ENCODE measurements at regions of chr7 and their contacts with region 1.

Region 1: DNA sequence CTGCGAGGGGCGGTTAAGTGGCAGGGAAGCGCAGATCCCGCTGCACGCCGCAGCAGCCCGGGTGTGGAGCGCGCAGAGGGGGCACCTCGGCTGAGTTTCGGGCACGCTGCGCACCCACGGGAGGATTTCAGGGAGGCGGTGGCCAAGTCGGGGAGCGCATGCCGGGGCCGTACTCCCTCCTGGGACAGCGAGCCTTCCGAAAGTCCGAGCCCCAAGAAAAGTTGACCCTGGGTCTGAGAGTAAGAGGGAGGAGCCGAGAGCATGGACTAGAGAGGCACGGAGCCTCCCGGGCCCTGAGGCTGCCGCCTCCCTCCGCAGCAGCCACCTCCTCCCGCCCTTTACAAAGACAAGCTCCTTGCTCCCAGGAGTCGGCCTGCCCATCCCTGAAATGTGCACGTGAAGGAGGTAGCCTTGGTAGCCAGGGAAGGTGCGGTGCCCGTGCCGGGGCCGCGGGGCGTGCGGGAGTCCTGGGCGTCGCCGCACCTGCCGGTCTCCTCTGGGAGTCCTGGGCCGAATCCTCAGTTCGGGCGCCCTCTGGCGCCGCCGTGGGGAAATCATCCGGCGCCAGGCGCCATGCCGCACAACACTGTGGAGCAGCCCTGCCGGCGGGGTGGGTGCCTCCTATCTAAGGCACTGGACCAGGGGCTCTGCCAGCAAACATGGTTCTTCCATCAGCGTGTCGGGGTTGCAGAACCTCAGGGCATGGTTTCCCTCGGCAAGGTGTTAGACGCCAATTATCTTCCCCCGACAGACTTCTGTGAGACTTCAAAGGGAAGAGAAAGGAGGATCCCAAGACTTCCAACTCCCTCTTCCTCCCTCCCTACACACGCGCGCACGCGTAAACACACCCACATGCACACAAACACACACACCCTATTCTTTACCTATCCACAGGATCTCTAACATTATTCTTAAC is 104.0 kb downstream of the TRIL start:
- DNase-seq: peak; percentile 96
- H3K4me3 ChIP-seq: peak overlapping the region; percentile 58 to 64
- H3K27ac ChIP-seq: no peak overlapping the region
- H3K4me1 ChIP-seq: peaks cover 4 to 9% of the 10 kb centered on the region in 2 experiments; a peak in 2 of 4 replicates
- H3K27me3 ChIP-seq: peaks cover 27% of the 10 kb centered on the region; the same call in 1 of the 2 replicates
- CTCF ChIP-seq: peak; percentile 97
- EP300 ChIP-seq: no peak
- RAD21 ChIP-seq: peak; percentile 95

Region 2: DNA sequence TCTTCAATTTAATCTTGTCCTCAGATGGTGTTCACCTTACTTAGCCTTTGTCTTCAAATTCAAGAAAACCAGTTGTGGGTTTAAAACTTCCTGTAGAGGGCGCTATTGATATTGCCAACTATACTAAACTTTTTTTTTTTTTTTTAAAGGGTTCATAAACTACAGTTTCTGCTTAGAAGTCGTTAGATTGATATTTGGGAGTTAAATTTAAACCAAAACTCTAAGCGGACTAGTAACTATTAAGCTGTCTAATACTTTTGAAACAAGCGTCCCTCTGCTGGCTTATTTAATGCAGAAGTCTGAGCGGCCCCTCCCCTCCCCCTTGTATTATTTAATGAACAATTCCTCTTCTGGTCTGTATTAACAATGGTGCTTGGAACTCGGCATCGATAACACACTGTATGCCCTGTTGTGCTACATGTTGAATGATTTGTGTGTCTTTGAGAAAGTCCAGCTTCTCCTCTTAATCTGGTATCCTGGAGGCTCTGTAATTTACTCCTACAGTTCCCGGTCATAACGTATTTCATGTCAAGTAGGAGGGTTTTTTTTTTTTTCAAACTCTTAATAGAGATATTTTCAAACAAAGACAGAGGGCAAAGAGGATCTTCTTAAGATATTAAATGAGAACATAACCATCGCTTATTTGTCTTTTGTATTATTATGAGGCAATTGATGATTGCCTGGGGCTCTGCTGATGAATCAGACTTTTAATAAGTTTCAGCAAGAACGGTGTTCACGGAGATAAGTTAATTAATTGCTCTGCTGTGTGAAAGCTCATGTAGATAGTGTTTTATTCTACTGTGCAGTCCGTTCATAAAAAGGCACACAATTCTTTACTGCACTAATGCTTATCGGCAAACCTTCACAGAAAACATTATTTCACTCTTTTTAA is 464.3 kb before region 1 on chr7:
- CTCF ChIA-PET with region 1: interaction called, 28 read pairs
- POLR2A ChIA-PET with region 1: no interaction called
- DNase-seq: peak; percentile 44
- H3K4me3 ChIP-seq: peak overlapping the region; percentile 32 to 45
- H3K27ac ChIP-seq: no peak overlapping the region
- H3K4me1 ChIP-seq: peaks cover 0 to 6% of the 10 kb centered on the region in 2 experiments; a peak in 1 of 4 replicates
- H3K27me3 ChIP-seq: no peaks in the 10 kb centered on the region; the same call in 1 of the 2 replicates
- CTCF ChIP-seq: peak; percentile 99
- EP300 ChIP-seq: no peak
- RAD21 ChIP-seq: peak; percentile 85

Region 3: DNA sequence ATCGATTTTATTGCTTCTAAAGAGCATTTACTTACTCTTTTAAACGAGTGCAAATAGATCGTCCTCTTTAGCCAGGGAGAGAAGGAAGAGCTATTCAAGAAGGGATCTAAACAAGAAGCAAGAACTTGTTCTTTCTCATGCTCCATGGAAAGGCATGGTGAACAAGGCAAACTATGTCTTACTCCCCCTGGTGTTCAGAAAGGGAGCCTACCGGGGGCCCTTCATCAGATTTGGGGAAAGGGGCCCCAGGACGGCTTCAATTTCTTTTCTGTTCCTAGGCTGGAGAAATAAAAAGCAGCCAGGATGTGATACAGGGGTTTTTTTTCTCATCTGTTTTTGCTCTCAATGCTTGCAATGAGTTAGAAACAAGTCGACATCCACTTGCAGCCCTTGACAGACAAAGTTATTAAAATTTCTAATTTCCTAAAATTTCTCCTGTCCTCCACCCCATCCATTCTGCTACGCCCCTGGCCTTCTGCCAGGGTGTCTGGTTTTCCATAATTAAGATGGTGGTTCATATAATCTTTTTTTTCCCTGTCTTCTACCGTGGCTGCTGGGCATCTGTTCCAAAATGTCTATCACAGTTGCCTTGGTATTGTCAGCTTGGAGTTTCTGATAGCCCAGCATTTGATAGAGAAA is 227.3 kb before region 1 on chr7:
- CTCF ChIA-PET with region 1: interaction called, 14 read pairs
- POLR2A ChIA-PET with region 1: no interaction called
- DNase-seq: peak; percentile 60
- H3K4me3 ChIP-seq: no peak overlapping the region
- H3K27ac ChIP-seq: no peak overlapping the region
- H3K4me1 ChIP-seq: peaks cover 3 to 8% of the 10 kb centered on the region in 2 experiments; a peak in 2 of 4 replicates
- H3K27me3 ChIP-seq: no peaks in the 10 kb centered on the region
- CTCF ChIP-seq: peak; percentile 86
- EP300 ChIP-seq: no peak
- RAD21 ChIP-seq: peak; percentile 76

Region 4: GRCh38 chr7:28830846-28831245 is 23.2 kb before region 1 on chr7:
- CTCF ChIA-PET with region 1: interaction called, 10 read pairs
- POLR2A ChIA-PET with region 1: no interaction called
- DNase-seq: no peak
- H3K4me3 ChIP-seq: no peak overlapping the region
- H3K27ac ChIP-seq: no peak overlapping the region
- H3K4me1 ChIP-seq: no peaks in the 10 kb centered on the region
- H3K27me3 ChIP-seq: no peaks in the 10 kb centered on the region
- CTCF ChIP-seq: no peak
- EP300 ChIP-seq: no peak
- RAD21 ChIP-seq: no peak

Region 5: GRCh38 chr7:28865601-28866144 is 11.6 kb after region 1 on chr7:
- CTCF ChIA-PET with region 1: interaction called, 30 read pairs
- POLR2A ChIA-PET with region 1: no interaction called
- DNase-seq: no peak
- H3K4me3 ChIP-seq: no peak overlapping the region
- H3K27ac ChIP-seq: no peak overlapping the region
- H3K4me1 ChIP-seq: no peaks in the 10 kb centered on the region
- H3K27me3 ChIP-seq: peaks cover 14% of the 10 kb centered on the region; the same call in 1 of the 2 replicates
- CTCF ChIP-seq: no peak
- EP300 ChIP-seq: no peak
- RAD21 ChIP-seq: no peak

Measured in SK-N-SH (cell line).